ENCODE measurements at regions of chr14 and their contacts with region 1.

Region 1: DNA sequence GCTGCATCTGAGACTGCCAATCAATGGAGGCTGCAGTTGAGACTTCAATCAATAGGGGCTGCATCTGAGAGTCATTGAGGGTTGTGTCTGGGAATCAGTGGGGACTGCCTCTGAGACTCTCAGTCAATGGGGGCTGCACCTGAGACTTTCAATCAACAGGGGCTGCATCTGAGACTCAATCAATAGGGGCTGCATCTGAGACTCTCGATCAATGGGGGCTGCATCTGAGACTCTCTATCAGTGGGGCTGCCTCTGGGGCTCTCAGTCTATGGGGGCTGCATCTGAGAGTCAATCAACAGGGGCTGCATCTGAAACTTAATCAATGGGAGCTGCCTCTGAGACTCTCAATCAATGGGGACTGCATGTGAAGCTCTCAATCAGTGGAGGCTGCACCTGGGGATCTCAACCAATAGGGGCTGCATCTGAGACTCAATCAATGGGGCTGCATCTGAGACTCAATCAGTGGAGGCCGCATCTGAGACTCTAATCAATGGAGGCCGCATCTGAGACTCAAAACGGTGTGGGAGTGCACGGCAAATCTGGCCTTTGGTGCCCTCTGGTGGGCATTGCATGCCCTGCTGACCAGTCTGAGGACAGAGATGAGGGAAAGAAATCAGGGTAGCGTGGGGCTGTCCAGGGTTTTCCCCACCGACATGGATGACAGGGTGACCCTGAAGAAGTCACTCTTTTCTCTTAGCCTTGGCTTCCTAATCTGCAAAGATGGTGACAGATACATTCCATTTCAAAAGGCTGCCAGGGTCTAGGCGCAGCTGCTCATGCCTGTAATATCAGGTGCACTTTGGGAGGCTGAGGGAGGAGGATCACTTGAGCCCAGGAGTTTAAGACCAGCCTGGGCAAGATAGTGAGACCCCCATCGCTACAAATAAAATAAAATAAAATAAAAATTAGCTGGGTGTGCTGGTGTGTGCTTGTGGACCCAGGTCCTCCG is 41.3 kb upstream of the EIF5 start:
- DNase-seq: peak; percentile 44
- ATAC-seq: peak; percentile 88
- H3K4me3 ChIP-seq: no peak overlapping the region
- H3K27ac ChIP-seq: no peak overlapping the region
- H3K4me1 ChIP-seq: no peaks in the 10 kb centered on the region
- H3K27me3 ChIP-seq: peaks cover 1 to 20% of the 10 kb centered on the region in 2 experiments; a peak in 2 of 5 replicates
- CTCF ChIP-seq: peak; percentile 95
- EP300 ChIP-seq: no peak
- POLR2A ChIP-seq: no peak
- RAD21 ChIP-seq: peak; percentile 88

Region 2: GRCh38 chr14:102568114-102568621 is 724.5 kb before region 1 on chr14:
- CTCF ChIA-PET with region 1: no interaction called
- POLR2A ChIA-PET with region 1: no interaction called
- in situ Hi-C with region 1: no loop called
- intact Hi-C with region 1: no loop called
- DNase-seq: peak; percentile 52
- ATAC-seq: peak; percentile 74
- H3K4me3 ChIP-seq: peak overlapping the region; percentile 28 to 52 (median 51); a peak in 5 of 6 replicates
- H3K27ac ChIP-seq: peak overlapping the region; percentile 58
- H3K4me1 ChIP-seq: peaks cover 76% of the 10 kb centered on the region
- H3K27me3 ChIP-seq: no peaks in the 10 kb centered on the region
- CTCF ChIP-seq: no peak
- EP300 ChIP-seq: 0 out of 4 replicates have a peak, but pooled peaks of 1 of the 2 experiments have one; percentile 14
- POLR2A ChIP-seq: peak; percentile 37 to 72; a peak in 2 of 4 replicates
- RAD21 ChIP-seq: no peak

Region 3: GRCh38 chr14:103078093-103078749 is 214.5 kb before region 1 on chr14:
- CTCF ChIA-PET with region 1: interaction called, 6 read pairs
- POLR2A ChIA-PET with region 1: no interaction called
- in situ Hi-C with region 1: loop called (anchors 5 kb)
- intact Hi-C with region 1: loop called (anchors 1 kb)
- DNase-seq: peak; percentile 73
- ATAC-seq: peak; percentile 34
- H3K4me3 ChIP-seq: no peak overlapping the region
- H3K27ac ChIP-seq: no peak overlapping the region
- H3K4me1 ChIP-seq: peaks cover 37% of the 10 kb centered on the region
- H3K27me3 ChIP-seq: peaks cover 2 to 33% of the 10 kb centered on the region in 2 experiments; a peak in 3 of 5 replicates
- CTCF ChIP-seq: peak; percentile 92
- EP300 ChIP-seq: no peak
- POLR2A ChIP-seq: no peak
- RAD21 ChIP-seq: peak; percentile 57; the same call in 1 of the 2 replicates

Region 4: DNA sequence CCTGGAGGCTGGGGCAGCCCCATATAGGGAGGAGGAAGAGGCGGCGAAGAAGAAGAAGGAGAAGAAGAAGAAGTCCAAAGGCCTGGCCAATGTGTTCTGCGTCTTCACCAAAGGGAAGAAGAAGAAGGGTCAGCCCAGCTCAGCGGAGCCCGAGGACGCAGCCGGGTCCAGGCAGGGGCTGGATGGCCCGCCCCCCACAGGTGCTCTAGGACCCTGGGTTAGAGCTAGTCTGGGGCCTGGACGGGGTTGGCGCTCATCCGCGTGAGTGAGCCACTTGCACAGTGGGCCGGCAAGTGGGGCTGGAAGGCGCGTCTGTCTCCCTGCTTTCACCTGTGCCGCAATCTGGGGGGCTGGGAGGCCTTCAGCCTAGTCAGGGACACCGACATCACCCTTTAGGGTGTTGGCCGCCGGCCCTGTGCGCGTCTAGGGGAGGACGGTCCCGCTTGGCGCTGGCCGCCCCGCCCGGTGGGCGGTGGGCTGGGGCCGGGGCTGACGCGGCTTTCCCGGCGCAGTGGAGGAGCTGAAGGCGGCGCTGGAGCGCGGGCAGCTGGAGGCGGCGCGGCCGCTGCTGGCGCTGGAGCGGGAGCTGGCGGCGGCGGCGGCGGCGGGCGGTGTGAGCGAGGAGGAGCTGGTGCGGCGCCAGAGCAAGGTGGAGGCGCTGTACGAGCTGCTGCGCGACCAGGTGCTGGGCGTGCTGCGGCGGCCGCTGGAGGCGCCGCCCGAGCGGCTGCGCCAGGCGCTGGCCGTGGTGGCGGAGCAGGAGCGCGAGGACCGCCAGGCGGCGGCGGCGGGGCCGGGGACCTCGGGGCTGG is 166.0 kb before region 1 on chr14:
- CTCF ChIA-PET with region 1: interaction called, 10 read pairs
- POLR2A ChIA-PET with region 1: no interaction called
- in situ Hi-C with region 1: no loop called
- intact Hi-C with region 1: no loop called
- DNase-seq: peak; percentile 63
- ATAC-seq: peak; percentile 87
- H3K4me3 ChIP-seq: peak overlapping the region in 2 of 3 experiments; percentile 11 to 65; a peak in 4 of 6 replicates
- H3K27ac ChIP-seq: no peak overlapping the region
- H3K4me1 ChIP-seq: peaks cover 29% of the 10 kb centered on the region
- H3K27me3 ChIP-seq: peaks cover 7 to 68% of the 10 kb centered on the region in 2 experiments; a peak in 4 of 5 replicates
- CTCF ChIP-seq: peak; percentile 60
- EP300 ChIP-seq: no peak
- POLR2A ChIP-seq: no peak
- RAD21 ChIP-seq: peak; percentile 90

Region 5: GRCh38 chr14:103185051-103185992 is 107.4 kb before region 1 on chr14:
- CTCF ChIA-PET with region 1: no interaction called
- POLR2A ChIA-PET with region 1: no interaction called
- in situ Hi-C with region 1: no loop called
- intact Hi-C with region 1: loop called (anchors 5 kb)
- DNase-seq: peak; percentile 27
- ATAC-seq: no peak
- H3K4me3 ChIP-seq: no peak overlapping the region
- H3K27ac ChIP-seq: no peak overlapping the region
- H3K4me1 ChIP-seq: peaks cover 35% of the 10 kb centered on the region
- H3K27me3 ChIP-seq: no peaks in the 10 kb centered on the region
- CTCF ChIP-seq: peak; percentile 46
- EP300 ChIP-seq: no peak
- POLR2A ChIP-seq: no peak
- RAD21 ChIP-seq: no peak

Region 6: DNA sequence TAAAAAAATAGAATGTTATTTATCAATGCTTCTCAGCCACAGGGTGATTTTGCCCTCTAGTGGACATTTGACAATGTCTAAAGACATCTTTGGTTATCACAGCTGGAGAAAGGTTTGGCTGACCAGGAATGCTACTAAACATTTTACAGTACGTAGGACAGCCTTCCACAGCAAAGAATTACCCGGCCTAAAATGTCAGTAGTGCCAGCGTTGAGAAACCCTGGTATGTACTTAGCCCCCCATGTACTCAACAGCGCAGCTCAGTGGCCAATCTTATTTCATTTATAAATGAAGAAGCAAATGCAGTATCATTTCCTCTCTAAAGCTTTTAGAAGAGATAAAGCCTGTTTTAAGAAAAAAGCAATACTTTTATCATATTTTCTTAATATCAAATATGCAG is 98.3 kb after region 1 on chr14:
- CTCF ChIA-PET with region 1: no interaction called
- POLR2A ChIA-PET with region 1: no interaction called
- in situ Hi-C with region 1: no loop called
- intact Hi-C with region 1: loop called (anchors 2 kb)
- DNase-seq: peak; percentile 44
- ATAC-seq: peak; percentile 56
- H3K4me3 ChIP-seq: no peak overlapping the region
- H3K27ac ChIP-seq: no peak overlapping the region
- H3K4me1 ChIP-seq: peaks cover 63% of the 10 kb centered on the region
- H3K27me3 ChIP-seq: no peaks in the 10 kb centered on the region; a peak in 1 of 5 replicates
- CTCF ChIP-seq: peak; percentile 58
- EP300 ChIP-seq: no peak
- POLR2A ChIP-seq: no peak
- RAD21 ChIP-seq: no peak

Measured in HepG2 (cell line).